ENCODE measurements at regions of chr13 and their contacts with region 1.

Region 1: GRCh38 chr13:45817833-45818232 is 33.7 kb downstream of the SIAH3 start:
- DNase-seq: no peak
- ATAC-seq: no peak
- H3K4me3 ChIP-seq: no peak overlapping the region
- H3K27ac ChIP-seq: no peak overlapping the region
- H3K4me1 ChIP-seq: peaks cover 0 to 4% (median 0%) of the 10 kb centered on the region in 12 donors
- H3K27me3 ChIP-seq: no peaks in the 10 kb centered on the region
- CTCF ChIP-seq: no peak
- POLR2A ChIP-seq: no peak

Region 2: GRCh38 chr13:46126552-46127357 is 308.9 kb after region 1 on chr13:
- intact Hi-C with region 1: loop called in 2 of 10 experiments (anchors 10 kb)
- DNase-seq: peak; percentile 45 to 68 (median 52)
- ATAC-seq: peak in 3 of 4 donors; percentile 87 to 90 (median 89)
- H3K4me3 ChIP-seq: no peak overlapping the region
- H3K27ac ChIP-seq: no peak overlapping the region
- H3K4me1 ChIP-seq: peaks cover 0 to 24% (median 0%) of the 10 kb centered on the region in 12 donors
- H3K27me3 ChIP-seq: peaks cover 0 to 34% (median 0%) of the 10 kb centered on the region in 9 donors
- CTCF ChIP-seq: peak; percentile 43 to 74 (median 62)
- POLR2A ChIP-seq: no peak

Measured in heart left ventricle (tissue), 16 donors.